ENCODE measurements at regions of chr20 and their contacts with region 1.

Region 1: GRCh38 chr20:44460795-44461141 is 14.9 kb upstream of the TTPAL start:
- DNase-seq: no peak
- ATAC-seq: peak; percentile 32 to 77 (median 70)
- H3K4me3 ChIP-seq: no peak overlapping the region
- H3K27ac ChIP-seq: no peak overlapping the region
- H3K4me1 ChIP-seq: peaks cover 0 to 12% (median 6%) of the 10 kb centered on the region in 3 donors
- H3K27me3 ChIP-seq: no peaks in the 10 kb centered on the region
- CTCF ChIP-seq: no peak

Region 2: GRCh38 chr20:44210422-44211176 is 250.2 kb before region 1 on chr20 and contains the start of gene OSER1:
- intact Hi-C with region 1: loop called in 1 of 3 experiments (anchors 10 kb)
- DNase-seq: peak; percentile 96 to 99 (median 98)
- ATAC-seq: peak; percentile 89 to 96 (median 93)
- H3K4me3 ChIP-seq: peak within 1 kb of the TSS; percentile 49 to 94 (median 87)
- H3K27ac ChIP-seq: peak within 1 kb of the TSS; percentile 81 to 98 (median 92)
- H3K4me1 ChIP-seq: peaks cover 17 to 32% (median 30%) of the 10 kb centered on the region in 3 donors
- H3K27me3 ChIP-seq: no peaks in the 10 kb centered on the region
- CTCF ChIP-seq: no peak
- total RNA-seq, gene OSER1: 8.0 to 13.5 (median 11.1) TPM

Region 3: GRCh38 chr20:44222633-44223368 is 238.0 kb before region 1 on chr20:
- intact Hi-C with region 1: loop called in 2 of 3 experiments (anchors 10 kb)
- DNase-seq: no peak
- ATAC-seq: no peak
- H3K4me3 ChIP-seq: no peak overlapping the region
- H3K27ac ChIP-seq: no peak overlapping the region
- H3K4me1 ChIP-seq: no peaks in the 10 kb centered on the region
- H3K27me3 ChIP-seq: no peaks in the 10 kb centered on the region
- CTCF ChIP-seq: no peak